ENCODE measurements at regions of chr11 and their contacts with region 1.

Region 1: DNA sequence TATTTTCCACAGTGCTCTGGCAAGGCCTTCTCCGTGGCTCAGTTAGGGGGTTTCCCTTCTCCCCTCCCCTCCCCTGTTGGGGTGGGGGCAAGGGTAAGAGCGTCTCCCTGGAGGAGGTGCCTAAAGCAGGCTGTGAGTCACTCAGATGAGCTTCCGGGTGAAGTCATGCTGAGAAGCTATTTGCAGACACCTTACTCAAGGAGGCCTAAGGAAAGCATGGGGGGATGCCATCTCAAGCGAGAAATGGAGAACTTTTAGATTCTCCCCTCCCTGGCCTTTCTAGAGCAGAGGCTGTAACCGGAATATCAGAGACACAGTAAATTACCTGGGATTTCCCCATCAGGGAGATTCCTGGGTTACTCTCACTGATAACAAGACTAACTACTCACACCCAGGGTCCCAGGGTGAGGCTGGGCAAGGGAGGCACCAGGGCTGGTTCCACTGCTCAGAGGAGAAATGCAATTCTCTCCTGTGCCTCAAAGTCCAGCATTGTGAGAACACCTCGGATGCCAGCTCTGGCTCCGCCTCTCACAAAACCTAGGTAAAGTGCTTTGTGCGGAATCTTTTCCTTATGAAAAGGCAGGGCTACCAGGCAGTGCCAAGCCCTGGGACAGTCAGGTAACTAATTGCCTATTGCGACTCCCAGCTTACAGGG is 123.6 kb downstream of the ABTB2 start:
- DNase-seq: peak; percentile 90
- H3K4me3 Mint-ChIP-seq: no peak overlapping the region
- H3K27ac Mint-ChIP-seq: peak overlapping the region; percentile 77
- H3K4me1 Mint-ChIP-seq: peaks cover 46% of the 10 kb centered on the region
- H3K27me3 Mint-ChIP-seq: peaks cover 6% of the 10 kb centered on the region

Region 2: GRCh38 chr11:33893711-33894397 is 340.4 kb before region 1 on chr11:
- CTCF ChIA-PET with region 1: no interaction called
- POLR2A ChIA-PET with region 1: no interaction called
- intact Hi-C with region 1: loop called (anchors 1 kb)
- DNase-seq: peak; percentile 88
- H3K4me3 Mint-ChIP-seq: peak overlapping the region; percentile 25
- H3K27ac Mint-ChIP-seq: no peak overlapping the region
- H3K4me1 Mint-ChIP-seq: peaks cover 31% of the 10 kb centered on the region
- H3K27me3 Mint-ChIP-seq: peaks cover 73% of the 10 kb centered on the region

Region 3: DNA sequence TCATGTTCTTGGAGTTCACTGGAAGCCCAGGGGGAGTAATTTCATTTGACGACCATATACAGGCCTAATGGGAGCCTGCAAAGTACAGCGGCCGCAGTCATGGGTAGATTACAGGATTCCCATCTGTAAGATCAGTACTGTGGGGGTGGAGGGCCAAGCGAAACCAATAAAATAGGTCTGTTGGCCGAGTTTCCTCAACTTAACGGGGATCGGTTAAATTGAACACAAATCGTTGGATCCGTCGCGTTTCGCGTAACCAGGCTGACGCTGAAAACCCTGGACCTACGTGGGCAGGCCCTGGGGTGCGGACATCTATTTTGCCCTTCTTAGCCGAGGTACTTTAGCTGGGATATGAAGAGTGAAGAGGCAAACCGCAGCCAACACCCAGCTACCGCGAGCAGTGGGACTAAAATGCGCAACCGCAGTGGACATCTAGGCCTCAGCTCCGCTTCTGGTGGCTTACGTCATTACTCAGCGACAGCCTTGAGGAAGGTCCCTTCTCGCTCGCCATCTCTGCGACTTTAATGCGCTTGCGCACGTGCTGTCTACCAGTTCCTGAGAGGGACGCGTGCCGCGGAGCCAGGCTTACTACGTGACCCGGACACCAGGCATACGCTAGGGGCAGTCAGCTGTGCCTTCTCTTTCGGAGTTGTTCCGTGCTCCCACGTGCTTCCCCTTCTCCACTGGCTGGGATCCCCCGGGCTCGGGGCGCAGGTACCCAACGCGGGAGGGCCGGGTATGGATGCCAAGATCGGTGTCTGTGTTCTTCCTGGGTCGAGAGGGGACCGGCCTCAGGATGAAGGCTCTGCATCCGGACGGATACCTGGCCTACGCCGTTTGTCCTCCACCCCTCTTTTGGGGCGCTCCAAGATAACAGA is 128.9 kb before region 1 on chr11 and contains the start of gene NAT10:
- CTCF ChIA-PET with region 1: no interaction called
- POLR2A ChIA-PET with region 1: interaction called, 3 read pairs
- intact Hi-C with region 1: loop called (anchors 5 kb)
- DNase-seq: peak; percentile 98
- H3K4me3 Mint-ChIP-seq: peak within 1 kb of the TSS; percentile 95
- H3K27ac Mint-ChIP-seq: peak within 1 kb of the TSS; percentile 98
- H3K4me1 Mint-ChIP-seq: peaks cover 45% of the 10 kb centered on the region
- H3K27me3 Mint-ChIP-seq: peaks cover 4% of the 10 kb centered on the region
- total RNA-seq, gene NAT10: 84.7 to 87.6 TPM

Region 4: GRCh38 chr11:34192481-34193401 is 41.5 kb before region 1 on chr11:
- CTCF ChIA-PET with region 1: no interaction called
- POLR2A ChIA-PET with region 1: no interaction called
- intact Hi-C with region 1: loop called (anchors 1 kb)
- DNase-seq: peak; percentile 51
- H3K4me3 Mint-ChIP-seq: no peak overlapping the region
- H3K27ac Mint-ChIP-seq: no peak overlapping the region
- H3K4me1 Mint-ChIP-seq: peaks cover 5% of the 10 kb centered on the region
- H3K27me3 Mint-ChIP-seq: peaks cover 3% of the 10 kb centered on the region

Region 5: GRCh38 chr11:34223021-34223813 is 11.0 kb before region 1 on chr11:
- CTCF ChIA-PET with region 1: no interaction called
- POLR2A ChIA-PET with region 1: no interaction called
- intact Hi-C with region 1: no loop called
- DNase-seq: no peak
- H3K4me3 Mint-ChIP-seq: no peak overlapping the region
- H3K27ac Mint-ChIP-seq: no peak overlapping the region
- H3K4me1 Mint-ChIP-seq: no peaks in the 10 kb centered on the region
- H3K27me3 Mint-ChIP-seq: peaks cover 6% of the 10 kb centered on the region

Region 6: DNA sequence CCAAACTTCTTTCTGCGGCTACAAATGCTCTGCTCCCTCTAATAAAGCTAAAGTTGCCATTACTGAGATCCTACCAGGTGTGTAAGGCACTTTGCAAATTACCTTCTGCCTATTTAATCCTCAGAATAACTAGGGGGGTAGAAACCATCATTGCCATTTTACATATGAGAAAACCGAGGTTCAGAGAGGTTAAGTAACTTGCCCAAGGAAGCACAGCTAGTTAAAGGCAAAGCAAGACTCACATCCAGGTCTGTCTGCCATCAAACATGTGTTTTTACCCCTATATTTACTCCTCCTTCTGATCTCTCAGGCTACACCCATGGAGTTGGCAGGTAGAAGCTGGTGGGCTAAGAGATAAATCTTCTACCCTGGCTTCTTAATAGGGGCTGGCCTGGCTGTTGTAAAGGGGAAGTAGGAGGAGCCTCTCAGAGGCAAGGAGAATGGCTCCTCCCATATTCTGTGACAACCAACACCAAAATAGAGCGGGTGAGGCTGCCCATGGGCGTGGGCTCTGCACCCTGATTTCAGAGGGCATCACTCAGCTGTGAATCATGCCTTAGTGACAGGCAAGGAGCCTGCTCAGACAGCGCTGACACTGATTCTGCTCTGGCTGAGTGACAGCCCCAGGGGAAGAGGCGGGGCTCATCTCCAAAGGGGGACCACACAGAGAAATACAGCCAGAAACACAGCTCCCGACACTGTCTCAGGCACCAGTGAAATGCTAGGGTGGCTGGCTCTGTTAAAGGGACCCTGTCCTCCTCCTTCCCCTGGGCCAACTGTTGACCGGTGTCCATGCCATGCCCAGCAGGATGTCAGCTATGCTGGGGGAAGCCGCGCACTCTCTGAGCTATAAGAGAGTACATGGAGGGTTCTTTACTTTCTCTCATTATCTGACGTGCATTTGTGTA is 16.8 kb after region 1 on chr11:
- CTCF ChIA-PET with region 1: interaction called, 6 read pairs
- POLR2A ChIA-PET with region 1: interaction called, 25 read pairs
- intact Hi-C with region 1: loop called (anchors 1 kb)
- DNase-seq: peak; percentile 82
- H3K4me3 Mint-ChIP-seq: peak overlapping the region; percentile 14
- H3K27ac Mint-ChIP-seq: no peak overlapping the region
- H3K4me1 Mint-ChIP-seq: peaks cover 52% of the 10 kb centered on the region
- H3K27me3 Mint-ChIP-seq: peaks cover 18% of the 10 kb centered on the region